T-cell (primary cell): ENCODE measurements at regions of chr7 and their contacts with region 1.

Region 1: GRCh38 chr7:129951226-129952085 is 1.3 kb downstream of the UBE2H start:
- DNase-seq: peak in 3 of 35 experiments; percentile 1 to 22 (median 7)
- ATAC-seq: no peak
- H3K4me3 ChIP-seq: peak overlapping the region; percentile 97 to 98
- H3K4me3 Mint-ChIP-seq: no peak overlapping the region
- H3K27ac ChIP-seq: peak overlapping the region; percentile 93
- H3K27ac Mint-ChIP-seq: no peak overlapping the region
- H3K4me1 ChIP-seq: peaks cover 19 to 38% of the 10 kb centered on the region in 2 experiments
- H3K4me1 Mint-ChIP-seq: peaks cover 16 to 31% (median 21%) of the 10 kb centered on the region in 3 donors
- H3K27me3 ChIP-seq: no peaks in the 10 kb centered on the region
- H3K27me3 Mint-ChIP-seq: no peaks in the 10 kb centered on the region

Region 2: GRCh38 chr7:128055637-128056036 is 1895.8 kb before region 1 on chr7:
- CTCF ChIA-PET with region 1: interaction called in 1 of 2 experiments, 12 read pairs
- POLR2A ChIA-PET with region 1: no interaction called
- DNase-seq: no peak
- ATAC-seq: no peak
- H3K4me3 ChIP-seq: no peak overlapping the region
- H3K4me3 Mint-ChIP-seq: no peak overlapping the region
- H3K27ac ChIP-seq: no peak overlapping the region
- H3K27ac Mint-ChIP-seq: peak overlapping the region in 1 of 2 donors; percentile 19
- H3K4me1 ChIP-seq: peaks cover 37 to 44% of the 10 kb centered on the region in 2 experiments
- H3K4me1 Mint-ChIP-seq: peaks cover 73 to 77% (median 75%) of the 10 kb centered on the region in 3 donors
- H3K27me3 ChIP-seq: no peaks in the 10 kb centered on the region
- H3K27me3 Mint-ChIP-seq: no peaks in the 10 kb centered on the region

Region 3: GRCh38 chr7:129494041-129494440 is 457.4 kb before region 1 on chr7:
- CTCF ChIA-PET with region 1: no interaction called
- POLR2A ChIA-PET with region 1: no interaction called
- DNase-seq: peak in 1 of 35 experiments; percentile 34
- ATAC-seq: peak in 3 of 4 experiments; percentile 27 to 55 (median 37)
- H3K4me3 ChIP-seq: no peak overlapping the region
- H3K4me3 Mint-ChIP-seq: no peak overlapping the region
- H3K27ac ChIP-seq: no peak overlapping the region
- H3K27ac Mint-ChIP-seq: peak overlapping the region in 1 of 2 donors; percentile 13
- H3K4me1 ChIP-seq: peaks cover 0 to 7% of the 10 kb centered on the region in 2 experiments
- H3K4me1 Mint-ChIP-seq: peaks cover 0 to 29% (median 4%) of the 10 kb centered on the region in 3 donors
- H3K27me3 ChIP-seq: no peaks in the 10 kb centered on the region
- H3K27me3 Mint-ChIP-seq: no peaks in the 10 kb centered on the region

Region 4: DNA sequence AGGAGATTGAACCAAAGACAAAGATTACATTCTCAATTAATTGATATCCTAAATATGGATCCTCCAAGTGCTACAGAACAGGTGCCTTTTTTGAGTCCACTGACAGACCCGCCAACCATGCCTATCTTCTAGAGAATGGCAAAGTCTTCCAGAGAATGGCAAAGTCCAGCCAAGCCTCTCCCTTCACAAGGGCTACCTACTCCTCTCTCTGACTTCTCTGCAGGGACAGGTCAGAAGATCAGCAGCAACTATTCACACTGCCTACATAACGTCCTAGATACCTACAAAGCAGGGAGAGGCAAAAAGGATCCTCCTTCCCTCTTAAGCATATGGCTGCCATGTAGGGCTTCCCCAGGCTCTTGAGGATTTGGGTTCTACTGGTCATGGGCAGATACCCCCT is 11.1 kb before region 1 on chr7:
- CTCF ChIA-PET with region 1: no interaction called
- POLR2A ChIA-PET with region 1: interaction called in 1 of 2 experiments, 11 read pairs
- DNase-seq: no peak
- ATAC-seq: no peak
- H3K4me3 ChIP-seq: no peak overlapping the region
- H3K4me3 Mint-ChIP-seq: no peak overlapping the region
- H3K27ac ChIP-seq: no peak overlapping the region
- H3K27ac Mint-ChIP-seq: peak overlapping the region in 1 of 2 donors; percentile 52
- H3K4me1 ChIP-seq: peaks cover 0 to 7% of the 10 kb centered on the region in 2 experiments
- H3K4me1 Mint-ChIP-seq: peaks cover 23 to 38% (median 32%) of the 10 kb centered on the region in 3 donors
- H3K27me3 ChIP-seq: no peaks in the 10 kb centered on the region
- H3K27me3 Mint-ChIP-seq: no peaks in the 10 kb centered on the region